Activated T-helper 1 cell treated with anti-CD3 and anti-CD28 coated beads, Interleukin-12 subunit alpha, Interleukin-12 subunit beta, Interleukin-2, Interleukin-4 antibody, amounts not matched to agents 30 ng/mL and 10 ng/mL and 1 ng/mL, durations not matched to agents 14 hours and 24 hours and 36 hours (primary cell): ENCODE measurements at regions of chr20 and their contacts with region 1.

Region 1: GRCh38 chr20:17968366-17969279 is at the starts of genes MGME1 and SNX5:
- DNase-seq: peak; percentile 100
- H3K4me3 Mint-ChIP-seq: peak within 1 kb of the TSS; percentile 99
- H3K27ac Mint-ChIP-seq: peak within 1 kb of the TSS; percentile 98
- H3K4me1 Mint-ChIP-seq: peaks cover 62% of the 10 kb centered on the region
- H3K27me3 Mint-ChIP-seq: no peaks in the 10 kb centered on the region
- total RNA-seq, gene MGME1: 32.1 and 33.6 TPM in 2 replicates
- total RNA-seq, gene SNX5: 238 and 248 TPM in 2 replicates

Region 2: DNA sequence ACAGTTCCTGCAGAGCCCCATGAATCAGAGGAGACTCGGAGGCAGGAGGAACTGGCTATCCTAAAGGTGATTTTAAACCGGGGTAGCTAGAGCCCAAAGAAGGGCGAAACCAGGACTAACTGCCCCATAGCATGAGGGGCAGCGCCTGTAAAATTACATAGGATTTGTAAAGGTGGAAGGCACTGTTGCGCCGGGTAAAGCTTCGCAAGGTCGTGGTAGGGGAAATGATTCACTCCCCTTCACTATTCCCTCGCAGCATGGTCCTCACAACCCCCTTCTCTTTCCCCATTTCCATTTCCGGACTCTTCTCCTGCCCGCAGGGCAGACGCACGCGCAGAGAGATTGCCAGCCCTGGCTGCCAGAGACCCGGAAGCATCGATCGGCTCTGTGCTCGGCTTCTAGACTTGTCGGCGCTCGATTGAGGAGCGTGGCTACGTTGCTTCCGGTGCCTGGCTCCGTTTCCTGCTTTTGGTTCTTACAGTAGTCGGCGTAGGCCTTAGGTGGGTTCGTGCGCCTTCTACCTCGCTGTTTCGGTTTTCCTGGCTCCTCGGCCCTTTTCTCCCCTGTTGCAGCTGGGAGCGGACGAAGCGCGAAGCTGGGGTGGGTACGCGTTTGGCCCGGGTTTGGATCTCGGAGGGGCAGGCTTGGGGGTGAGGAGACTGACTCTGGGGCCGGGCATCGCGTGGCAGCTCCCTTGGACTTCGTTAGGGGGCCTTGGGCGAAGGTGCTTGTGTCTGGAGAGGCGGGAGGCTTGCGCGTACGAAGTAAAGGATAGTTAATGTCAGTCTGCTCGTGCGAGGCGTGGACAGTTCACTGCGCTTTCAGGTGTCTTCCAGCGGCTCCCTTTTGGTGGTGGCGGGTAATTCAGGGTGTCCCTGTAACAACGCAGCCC is 1238.8 kb before region 1 on chr20 and contains the start of gene SNRPB2:
- intact Hi-C with region 1: loop called (anchors 5 kb)
- DNase-seq: peak; percentile 88
- H3K4me3 Mint-ChIP-seq: peak within 1 kb of the TSS; percentile 98
- H3K27ac Mint-ChIP-seq: peak within 1 kb of the TSS; percentile 98
- H3K4me1 Mint-ChIP-seq: peaks cover 50% of the 10 kb centered on the region
- H3K27me3 Mint-ChIP-seq: peaks cover 8% of the 10 kb centered on the region
- total RNA-seq, gene SNRPB2: 130 and 131 TPM in 2 replicates

Region 3: DNA sequence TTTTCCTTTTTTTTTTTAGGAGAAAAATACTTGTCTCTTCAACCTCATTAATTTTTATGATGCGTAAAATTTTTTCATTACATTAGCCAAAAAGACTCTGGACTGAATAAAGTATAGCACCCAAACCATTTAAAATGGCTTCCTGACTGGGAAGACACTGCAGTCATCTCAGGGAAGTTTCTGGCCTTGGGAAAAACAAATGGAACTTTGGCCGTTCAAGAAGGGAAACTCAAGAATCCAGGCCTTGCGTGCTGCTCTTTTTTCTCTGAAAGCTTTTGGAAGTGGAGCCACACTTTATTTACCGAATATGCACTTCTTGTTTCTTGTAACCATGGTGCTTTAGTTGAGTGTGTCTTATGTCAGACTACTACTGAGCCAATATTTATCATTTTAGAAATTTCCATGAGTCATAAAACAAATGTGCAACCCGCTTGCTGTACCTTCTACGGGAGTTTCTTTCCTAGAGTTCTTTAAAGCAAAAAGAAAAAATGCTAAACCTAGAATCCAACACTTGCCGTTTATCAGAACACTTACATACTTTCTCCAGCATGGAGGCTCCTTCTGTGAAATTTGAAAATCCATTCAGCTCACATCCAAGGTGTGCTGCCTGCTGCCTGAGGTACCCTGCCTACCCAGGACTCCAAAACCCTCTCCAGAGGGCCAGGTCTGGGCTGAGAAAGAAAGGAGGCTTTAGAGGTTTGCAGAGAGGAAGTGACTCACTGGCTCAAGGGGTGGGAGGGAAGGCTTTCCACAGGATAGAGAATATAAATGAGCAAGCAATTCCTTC is 410.3 kb before region 1 on chr20:
- intact Hi-C with region 1: loop called (anchors 1 kb)
- DNase-seq: no peak
- H3K4me3 Mint-ChIP-seq: peak overlapping the region; percentile 71
- H3K27ac Mint-ChIP-seq: peak overlapping the region; percentile 95
- H3K4me1 Mint-ChIP-seq: peaks cover 43% of the 10 kb centered on the region
- H3K27me3 Mint-ChIP-seq: no peaks in the 10 kb centered on the region

Region 4: DNA sequence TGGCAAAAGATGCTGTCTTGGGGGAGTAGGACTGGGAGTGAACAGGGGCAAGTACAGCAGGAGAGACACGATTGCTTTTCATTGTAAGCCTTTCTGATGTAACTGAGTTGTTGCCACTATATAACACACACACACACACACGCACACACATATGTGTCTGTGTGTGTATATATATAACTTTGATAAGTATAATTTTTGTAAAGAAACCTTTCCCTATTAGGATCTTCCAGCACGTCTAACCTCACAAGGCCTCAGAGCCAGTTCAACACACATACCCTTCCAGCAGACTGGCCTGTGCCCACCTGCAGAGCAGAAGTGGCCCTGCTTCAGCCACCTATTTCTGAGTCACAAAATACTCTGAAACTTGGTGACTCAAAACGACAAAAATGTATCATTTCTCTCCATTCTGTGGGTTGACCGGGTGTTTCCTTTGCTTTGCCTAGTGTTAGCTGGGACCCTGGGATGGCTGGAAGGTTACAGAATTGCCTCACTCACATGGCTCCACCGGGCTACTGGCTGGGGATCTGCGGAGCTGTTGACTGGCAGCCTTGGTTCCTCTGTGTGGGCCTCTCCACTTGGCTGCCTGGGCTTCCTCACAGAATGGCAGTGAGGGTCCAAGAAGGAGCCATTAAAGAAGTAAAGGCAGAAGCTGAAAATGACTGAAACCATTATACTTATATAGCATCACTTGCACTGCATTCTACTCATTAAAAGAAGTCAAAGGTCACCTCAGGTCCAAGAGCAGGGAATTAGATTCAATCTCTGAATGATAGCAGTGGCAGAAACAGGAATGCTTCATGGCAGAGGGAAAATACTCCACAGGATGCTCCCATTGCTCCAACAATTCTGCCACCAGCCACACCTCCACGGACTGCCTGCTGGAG is 142.4 kb before region 1 on chr20:
- intact Hi-C with region 1: loop called (anchors 1 kb)
- DNase-seq: peak; percentile 5
- H3K4me3 Mint-ChIP-seq: no peak overlapping the region
- H3K27ac Mint-ChIP-seq: peak overlapping the region; percentile 71
- H3K4me1 Mint-ChIP-seq: peaks cover 15% of the 10 kb centered on the region
- H3K27me3 Mint-ChIP-seq: peaks cover 4% of the 10 kb centered on the region

Region 5: GRCh38 chr20:18287915-18288748 is 319.5 kb after region 1 on chr20 and contains the start of gene ZNF133:
- intact Hi-C with region 1: loop called (anchors 5 kb)
- DNase-seq: peak; percentile 96
- H3K4me3 Mint-ChIP-seq: peak within 1 kb of the TSS; percentile 94
- H3K27ac Mint-ChIP-seq: peak within 1 kb of the TSS; percentile 97
- H3K4me1 Mint-ChIP-seq: peaks cover 23% of the 10 kb centered on the region
- H3K27me3 Mint-ChIP-seq: peaks cover 16% of the 10 kb centered on the region
- total RNA-seq, gene ZNF133: 7.6 and 7.8 TPM in 2 replicates

Region 6: DNA sequence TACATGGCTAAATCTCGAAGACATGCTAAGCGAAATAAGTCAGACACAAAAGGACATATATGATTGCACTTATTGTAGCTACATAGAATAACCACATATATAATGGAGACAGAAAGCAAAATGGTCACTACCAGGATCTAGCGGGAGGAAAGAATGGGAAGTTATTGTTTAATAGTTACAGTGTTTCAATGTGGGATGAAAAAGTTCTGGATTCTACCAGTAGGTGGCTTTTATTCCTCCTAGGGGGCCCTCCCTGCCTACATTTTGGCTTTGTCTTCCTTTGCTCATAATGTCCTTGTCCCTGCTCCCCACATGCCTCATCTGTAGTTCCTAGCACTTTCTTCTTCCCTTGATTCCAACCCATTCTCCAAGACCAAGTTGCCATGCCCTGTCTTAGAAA is 336.0 kb after region 1 on chr20:
- intact Hi-C with region 1: no loop called
- DNase-seq: no peak
- H3K4me3 Mint-ChIP-seq: no peak overlapping the region
- H3K27ac Mint-ChIP-seq: no peak overlapping the region
- H3K4me1 Mint-ChIP-seq: no peaks in the 10 kb centered on the region
- H3K27me3 Mint-ChIP-seq: no peaks in the 10 kb centered on the region

Region 7: DNA sequence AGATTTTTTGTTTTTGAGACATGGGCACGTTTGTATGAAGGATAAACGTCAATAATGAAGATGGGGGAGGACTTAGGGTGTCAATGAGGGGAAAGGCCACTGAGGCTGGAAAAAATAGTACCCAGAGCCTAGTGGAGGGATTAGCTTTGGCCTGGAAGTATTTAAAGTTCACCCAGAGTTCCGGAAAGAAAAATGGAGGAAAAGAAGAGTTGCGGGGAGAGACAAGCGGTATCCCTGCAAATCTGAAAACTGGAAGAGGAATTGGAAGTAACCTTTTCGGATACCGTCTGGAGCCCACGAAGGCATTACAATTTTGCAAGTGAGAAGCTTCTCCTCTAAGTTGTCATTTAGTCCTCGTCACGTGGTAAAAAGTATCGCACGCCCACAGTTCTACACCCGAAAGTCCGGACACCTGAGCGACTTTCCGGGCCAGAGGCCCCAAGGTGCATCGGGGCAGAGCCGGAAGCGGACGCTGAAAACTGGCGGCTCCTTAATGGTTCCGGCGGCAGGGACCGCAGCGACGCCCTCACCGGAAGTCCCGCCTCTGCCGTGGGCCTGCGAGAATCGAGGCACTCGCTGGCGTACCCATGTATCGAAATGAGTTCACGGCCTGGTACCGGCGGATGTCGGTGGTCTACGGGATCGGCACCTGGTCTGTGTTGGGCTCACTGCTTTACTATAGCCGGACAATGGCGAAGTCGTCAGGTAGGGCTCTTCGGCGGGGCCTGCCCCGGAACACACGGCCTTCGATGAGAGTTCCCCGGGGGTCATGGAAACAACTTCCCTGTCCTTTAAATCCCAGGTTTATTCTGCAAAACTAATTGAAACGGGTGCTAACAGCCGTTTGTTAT is 598.5 kb after region 1 on chr20 and contains the start of gene SMIM26:
- intact Hi-C with region 1: loop called (anchors 5 kb)
- DNase-seq: peak; percentile 91
- H3K4me3 Mint-ChIP-seq: peak within 1 kb of the TSS; percentile 95
- H3K27ac Mint-ChIP-seq: peak within 1 kb of the TSS; percentile 95
- H3K4me1 Mint-ChIP-seq: peaks cover 10% of the 10 kb centered on the region
- H3K27me3 Mint-ChIP-seq: no peaks in the 10 kb centered on the region
- total RNA-seq, gene SMIM26: 54.9 and 57.9 TPM in 2 replicates